Activated T-helper 1 cell treated with anti-CD3 and anti-CD28 coated beads, Interleukin-12 subunit alpha, Interleukin-12 subunit beta, Interleukin-2, Interleukin-4 antibody, amounts not matched to agents 30 ng/mL and 10 ng/mL and 1 ng/mL, durations not matched to agents 14 hours and 24 hours and 36 hours (primary cell): ENCODE measurements at regions of chr3 and their contacts with region 1.

Region 1: DNA sequence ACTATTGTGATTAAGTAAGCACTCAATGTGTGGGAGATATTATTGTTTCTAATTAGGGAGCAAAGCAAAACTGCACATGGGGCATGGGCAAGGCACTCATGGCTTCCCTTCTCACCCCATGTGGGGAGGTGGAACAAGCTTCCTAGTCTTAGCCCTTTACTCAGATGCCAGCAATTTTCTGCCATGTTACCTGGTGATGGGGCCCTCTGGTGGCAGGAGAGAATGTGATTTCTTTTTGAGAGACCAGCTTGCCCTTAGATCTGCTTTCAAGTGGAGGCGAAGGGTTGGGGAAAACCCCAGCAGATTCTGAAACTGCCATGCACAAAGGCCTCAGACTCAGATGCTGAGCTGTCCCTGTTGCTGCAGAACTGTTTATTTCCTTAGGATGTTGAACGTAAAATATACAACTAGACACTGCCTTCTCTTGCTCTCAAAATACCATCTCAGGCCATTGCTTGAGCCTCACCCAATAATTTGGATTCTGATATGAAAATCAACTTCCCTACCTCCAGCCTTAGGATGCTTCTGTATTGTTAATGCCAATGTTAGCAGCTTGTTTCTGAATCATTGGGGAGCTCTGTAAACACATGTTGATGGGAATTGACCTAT is 130.2 kb upstream of the TPRG1 start:
- DNase-seq: peak; percentile 75
- H3K4me3 Mint-ChIP-seq: no peak overlapping the region
- H3K27ac Mint-ChIP-seq: no peak overlapping the region
- H3K4me1 Mint-ChIP-seq: peaks cover 56% of the 10 kb centered on the region
- H3K27me3 Mint-ChIP-seq: peaks cover 4% of the 10 kb centered on the region

Region 2: DNA sequence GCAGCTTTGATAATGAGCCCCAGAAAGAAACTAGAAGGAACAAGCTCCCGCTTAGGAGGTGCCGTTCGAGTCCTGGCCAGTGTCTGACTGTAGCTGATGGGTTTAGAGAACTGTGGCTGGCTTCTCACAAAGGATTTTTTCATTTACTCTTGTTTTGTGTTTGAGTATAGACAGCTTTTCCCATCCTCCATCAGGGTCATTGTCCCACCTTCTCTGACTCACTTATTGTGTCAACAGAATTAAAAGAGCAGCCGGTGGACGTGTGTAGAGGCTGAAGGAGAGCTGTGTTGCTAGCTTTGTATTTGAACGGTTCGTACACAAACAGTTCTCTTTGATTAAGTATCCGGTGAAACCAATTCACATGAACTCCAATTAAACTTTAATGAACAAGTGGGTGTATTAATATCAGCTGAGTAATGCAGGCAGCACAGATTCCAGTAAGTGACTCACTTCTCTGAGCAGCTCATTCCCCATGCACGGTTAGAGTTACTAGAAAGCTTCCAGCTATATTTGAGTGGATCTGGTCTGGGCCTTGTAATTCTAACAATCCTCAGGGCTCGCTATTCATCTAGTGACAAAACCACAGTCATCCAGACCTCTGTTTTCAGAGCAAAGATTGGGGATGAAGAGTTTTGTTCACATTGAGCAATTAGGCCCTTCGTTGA is 746.6 kb before region 1 on chr3:
- intact Hi-C with region 1: loop called (anchors 1 kb)
- DNase-seq: no peak
- H3K4me3 Mint-ChIP-seq: no peak overlapping the region
- H3K27ac Mint-ChIP-seq: peak overlapping the region; percentile 33
- H3K4me1 Mint-ChIP-seq: peaks cover 86% of the 10 kb centered on the region
- H3K27me3 Mint-ChIP-seq: no peaks in the 10 kb centered on the region

Region 3: DNA sequence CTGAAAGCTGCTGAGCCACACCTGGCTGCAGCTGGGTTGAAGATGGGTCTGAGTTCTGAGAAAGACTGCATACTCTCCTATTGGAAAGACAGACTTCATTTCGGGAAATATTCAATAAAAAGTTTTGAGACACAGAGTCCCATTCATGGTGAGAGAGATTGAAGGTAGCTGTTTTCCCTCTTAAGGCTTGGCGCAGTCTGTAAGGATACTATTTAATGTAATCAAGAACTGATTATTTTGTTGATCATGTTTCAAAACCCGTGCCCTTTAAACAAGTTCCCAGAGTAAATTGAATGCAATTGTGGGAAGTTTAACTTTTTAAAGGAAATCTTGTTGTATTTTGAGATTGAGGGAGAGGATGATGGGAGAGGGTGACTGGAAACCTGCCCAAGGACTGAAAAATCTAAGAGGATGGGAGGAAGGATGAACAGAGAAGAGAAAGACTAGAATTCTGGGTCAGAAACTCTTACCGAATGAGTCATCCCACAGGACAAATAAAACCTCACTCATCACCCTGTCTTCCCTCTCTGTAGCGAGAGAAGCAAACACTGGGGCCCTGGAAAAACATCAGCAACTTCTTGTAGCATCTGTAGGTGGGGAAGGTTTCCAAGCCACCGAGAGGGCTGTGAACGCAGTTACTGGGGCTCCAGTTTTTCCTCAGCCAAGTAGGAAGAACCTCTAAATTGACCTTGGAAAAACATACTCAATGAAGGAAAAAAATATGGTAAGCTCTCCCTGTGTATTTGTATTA is 63.0 kb before region 1 on chr3:
- intact Hi-C with region 1: loop called (anchors 5 kb)
- DNase-seq: no peak
- H3K4me3 Mint-ChIP-seq: no peak overlapping the region
- H3K27ac Mint-ChIP-seq: no peak overlapping the region
- H3K4me1 Mint-ChIP-seq: peaks cover 12% of the 10 kb centered on the region
- H3K27me3 Mint-ChIP-seq: peaks cover 15% of the 10 kb centered on the region

Region 4: DNA sequence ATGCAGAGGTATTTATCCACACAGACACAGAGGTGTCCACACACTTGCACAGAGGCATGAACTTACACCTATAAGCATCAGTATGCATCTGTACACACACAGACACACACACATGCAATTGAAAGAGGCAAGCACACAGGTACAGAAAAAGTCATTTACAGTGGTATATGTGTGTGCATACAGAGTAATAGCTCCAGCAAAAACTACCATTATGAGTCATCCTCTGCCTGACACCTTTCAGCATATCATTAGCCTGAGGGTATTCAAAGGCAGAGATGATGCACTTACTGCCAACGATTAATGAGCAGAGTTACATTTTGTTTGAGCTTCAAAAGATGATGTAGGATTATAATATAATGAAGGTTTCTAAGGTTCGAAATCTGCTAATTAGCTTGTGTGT is 29.9 kb after region 1 on chr3:
- intact Hi-C with region 1: loop called (anchors 1 kb)
- DNase-seq: no peak
- H3K4me3 Mint-ChIP-seq: no peak overlapping the region
- H3K27ac Mint-ChIP-seq: no peak overlapping the region
- H3K4me1 Mint-ChIP-seq: peaks cover 8% of the 10 kb centered on the region
- H3K27me3 Mint-ChIP-seq: no peaks in the 10 kb centered on the region

Region 5: DNA sequence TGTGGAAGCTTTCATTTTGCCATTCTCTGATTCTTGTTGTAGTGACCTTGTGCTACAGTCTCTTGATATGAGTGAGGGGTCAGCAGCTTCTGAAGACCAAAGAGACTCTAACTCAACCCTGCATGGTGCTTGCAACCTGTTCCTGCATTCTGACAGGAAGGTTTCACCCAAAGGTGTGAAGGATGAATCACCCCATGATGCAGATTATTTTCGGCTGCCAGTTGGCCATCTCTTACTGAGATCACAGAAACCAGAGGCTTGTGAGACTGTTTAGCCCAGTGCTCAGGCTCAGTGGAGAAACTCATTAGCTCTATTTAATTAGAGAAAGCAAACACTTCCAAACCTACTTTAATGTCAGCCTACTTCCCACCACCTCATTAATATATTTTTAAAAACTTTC is 100.9 kb after region 1 on chr3:
- intact Hi-C with region 1: loop called (anchors 1 kb)
- DNase-seq: no peak
- H3K4me3 Mint-ChIP-seq: no peak overlapping the region
- H3K27ac Mint-ChIP-seq: peak overlapping the region; percentile 16
- H3K4me1 Mint-ChIP-seq: peaks cover 59% of the 10 kb centered on the region
- H3K27me3 Mint-ChIP-seq: peaks cover 6% of the 10 kb centered on the region

Region 6: GRCh38 chr3:190197346-190197763 is 1155.8 kb after region 1 on chr3:
- intact Hi-C with region 1: no loop called
- DNase-seq: no peak
- H3K4me3 Mint-ChIP-seq: no peak overlapping the region
- H3K27ac Mint-ChIP-seq: no peak overlapping the region
- H3K4me1 Mint-ChIP-seq: no peaks in the 10 kb centered on the region
- H3K27me3 Mint-ChIP-seq: peaks cover 10% of the 10 kb centered on the region